Adrenal gland (tissue), 19 donors: ENCODE measurements at regions of chr18 and their contacts with region 1.

Region 1: GRCh38 chr18:48675352-48675761 is 136.5 kb downstream of the CTIF start:
- DNase-seq: peak; percentile 90 to 95 (median 94)
- H3K4me3 ChIP-seq: no peak overlapping the region
- H3K27ac ChIP-seq: peak overlapping the region in 3 of 5 donors; percentile 10 to 83 (median 58)
- H3K4me1 ChIP-seq: peaks cover 22 to 33% of the 10 kb centered on the region in 2 donors
- H3K27me3 ChIP-seq: no peaks in the 10 kb centered on the region
- CTCF ChIP-seq: peak; percentile 83 to 98 (median 96)
- POLR2A ChIP-seq: no peak

Region 2: DNA sequence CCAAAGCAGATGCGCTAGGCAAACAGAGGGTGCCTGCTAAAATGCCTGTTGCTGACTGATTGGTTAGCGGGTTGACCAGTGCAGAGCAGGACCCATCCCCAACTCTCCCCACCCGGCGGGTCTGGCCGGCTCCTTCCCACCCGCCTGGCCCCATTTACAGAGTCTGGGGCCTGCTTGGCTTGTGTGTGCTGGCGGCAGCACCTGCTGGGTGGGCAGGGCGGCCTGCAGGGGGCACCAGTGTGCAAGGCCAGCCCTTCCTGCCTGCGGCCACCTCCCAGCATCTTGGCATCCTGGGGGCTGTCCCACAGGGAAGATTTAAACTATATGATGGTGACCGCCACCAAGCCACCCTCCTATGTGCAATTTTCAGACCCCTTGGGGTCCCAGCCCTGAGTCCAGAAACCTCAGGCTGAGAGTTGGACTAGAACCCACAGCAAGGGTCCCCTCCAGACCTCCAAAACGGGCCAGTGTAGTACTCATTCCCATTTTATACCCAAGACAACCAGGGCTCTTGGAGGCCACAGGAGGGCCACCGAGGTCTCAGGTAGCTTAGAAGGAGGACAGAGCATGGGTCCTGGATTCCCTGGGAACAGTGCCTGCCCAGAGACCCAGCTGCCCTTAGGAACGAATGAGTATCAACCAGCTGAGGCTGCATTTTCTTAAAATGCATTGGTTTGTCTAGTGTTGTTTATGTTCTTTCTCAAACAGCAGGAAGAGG is 101.8 kb after region 1 on chr18:
- intact Hi-C with region 1: loop called in 1 of 2 experiments (anchors 10 kb)
- DNase-seq: peak; percentile 34 to 75 (median 53)
- H3K4me3 ChIP-seq: no peak overlapping the region
- H3K27ac ChIP-seq: peak overlapping the region in 1 of 5 donors; percentile 59
- H3K4me1 ChIP-seq: peaks cover 6 to 41% of the 10 kb centered on the region in 2 donors
- H3K27me3 ChIP-seq: no peaks in the 10 kb centered on the region
- CTCF ChIP-seq: peak; percentile 68 to 86 (median 76)
- POLR2A ChIP-seq: no peak

Region 3: GRCh38 chr18:48951448-48952286 is 276.3 kb after region 1 on chr18:
- intact Hi-C with region 1: loop called (anchors 10 kb)
- DNase-seq: peak; percentile 88 to 95 (median 91)
- H3K4me3 ChIP-seq: peak overlapping the region; percentile 38 to 91 (median 74)
- H3K27ac ChIP-seq: peak overlapping the region; percentile 97 to 100 (median 99)
- H3K4me1 ChIP-seq: peaks cover 17 to 33% of the 10 kb centered on the region in 2 donors
- H3K27me3 ChIP-seq: no peaks in the 10 kb centered on the region
- CTCF ChIP-seq: peak in 4 of 6 experiments; percentile 10 to 59 (median 38)
- POLR2A ChIP-seq: peak; percentile 84

Region 4: DNA sequence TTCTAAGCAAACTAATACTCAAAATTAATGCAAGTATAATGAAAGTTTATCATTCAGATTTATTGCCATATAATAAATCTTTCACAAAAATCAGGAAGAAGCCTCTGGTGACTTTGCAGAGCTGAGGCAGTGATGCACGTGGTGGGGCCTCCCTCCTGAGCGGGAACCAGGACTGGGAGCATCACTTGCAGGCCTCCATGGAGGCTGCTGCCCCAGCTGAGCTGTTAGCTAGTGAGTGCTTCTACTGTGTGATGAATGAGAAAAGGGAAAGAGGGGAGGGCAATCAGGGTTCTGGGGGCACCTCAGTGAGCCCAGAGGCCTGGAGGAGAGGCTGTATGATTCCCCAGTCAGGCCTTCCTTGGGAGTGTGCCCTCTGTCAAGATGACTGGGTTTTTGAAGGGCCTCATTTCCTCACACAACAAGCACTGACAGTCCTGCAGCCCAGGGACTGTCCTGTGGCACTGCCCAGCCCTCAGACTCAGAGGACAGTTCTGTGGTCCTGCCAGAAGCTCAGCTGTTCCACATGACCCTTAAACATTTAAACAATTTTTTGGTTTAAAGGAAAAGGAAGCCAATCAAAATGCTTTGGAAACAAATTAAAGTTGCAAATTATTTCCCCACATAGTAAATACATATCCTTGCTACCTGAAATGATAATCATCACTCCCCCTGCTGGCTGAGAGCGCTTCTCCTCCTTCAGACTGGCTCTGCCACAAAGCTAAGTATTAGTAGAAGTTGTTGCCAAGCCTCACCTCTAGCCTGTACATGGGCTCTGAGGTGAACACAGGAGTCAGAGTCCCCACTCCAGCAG is 366.3 kb after region 1 on chr18:
- intact Hi-C with region 1: loop called in 1 of 2 experiments (anchors 10 kb)
- DNase-seq: peak; percentile 48 to 84 (median 56)
- H3K4me3 ChIP-seq: no peak overlapping the region
- H3K27ac ChIP-seq: no peak overlapping the region
- H3K4me1 ChIP-seq: no peaks in the 10 kb centered on the region
- H3K27me3 ChIP-seq: no peaks in the 10 kb centered on the region
- CTCF ChIP-seq: peak; percentile 38 to 64 (median 58)
- POLR2A ChIP-seq: no peak

Region 5: GRCh38 chr18:49238433-49239042 is 563.2 kb after region 1 on chr18:
- intact Hi-C with region 1: loop called (anchors 10 kb)
- DNase-seq: peak in 2 of 7 donors; percentile 25 to 40
- H3K4me3 ChIP-seq: no peak overlapping the region
- H3K27ac ChIP-seq: no peak overlapping the region
- H3K4me1 ChIP-seq: no peaks in the 10 kb centered on the region
- H3K27me3 ChIP-seq: no peaks in the 10 kb centered on the region
- CTCF ChIP-seq: peak; percentile 40 to 58 (median 52)
- POLR2A ChIP-seq: no peak

Region 6: DNA sequence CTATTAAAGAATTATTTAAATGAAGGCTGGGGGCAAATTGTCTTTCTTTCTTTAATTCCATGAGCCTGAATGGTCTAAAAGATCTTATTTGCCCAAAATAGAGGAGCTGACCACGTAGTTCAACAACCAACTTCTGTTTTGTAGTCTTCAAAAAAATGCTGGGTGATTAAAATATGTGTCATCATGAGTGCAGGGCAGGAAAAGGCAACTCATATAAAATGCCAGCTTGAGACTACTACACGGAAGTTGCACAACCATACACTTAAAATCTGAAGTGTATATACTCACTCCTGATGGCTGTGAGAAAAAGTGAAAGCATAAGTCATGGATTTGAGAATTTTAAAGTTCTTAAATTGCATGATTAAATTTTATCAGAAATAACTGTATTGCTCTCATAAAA is 574.2 kb after region 1 on chr18:
- intact Hi-C with region 1: loop called in 1 of 2 experiments (anchors 10 kb)
- DNase-seq: no peak
- H3K4me3 ChIP-seq: no peak overlapping the region
- H3K27ac ChIP-seq: no peak overlapping the region
- H3K4me1 ChIP-seq: peaks cover 0 to 13% of the 10 kb centered on the region in 2 donors
- H3K27me3 ChIP-seq: no peaks in the 10 kb centered on the region
- CTCF ChIP-seq: no peak
- POLR2A ChIP-seq: no peak

Region 7: GRCh38 chr18:49412679-49413078 is 737.3 kb after region 1 on chr18:
- intact Hi-C with region 1: loop called in 1 of 2 experiments (anchors 10 kb)
- DNase-seq: no peak
- H3K4me3 ChIP-seq: no peak overlapping the region
- H3K27ac ChIP-seq: no peak overlapping the region
- H3K4me1 ChIP-seq: peaks cover 5 to 8% of the 10 kb centered on the region in 2 donors
- H3K27me3 ChIP-seq: no peaks in the 10 kb centered on the region
- CTCF ChIP-seq: no peak
- POLR2A ChIP-seq: no peak